GM12878 (cell line): ENCODE measurements at regions of chr12 and their contacts with region 1.

Region 1: DNA sequence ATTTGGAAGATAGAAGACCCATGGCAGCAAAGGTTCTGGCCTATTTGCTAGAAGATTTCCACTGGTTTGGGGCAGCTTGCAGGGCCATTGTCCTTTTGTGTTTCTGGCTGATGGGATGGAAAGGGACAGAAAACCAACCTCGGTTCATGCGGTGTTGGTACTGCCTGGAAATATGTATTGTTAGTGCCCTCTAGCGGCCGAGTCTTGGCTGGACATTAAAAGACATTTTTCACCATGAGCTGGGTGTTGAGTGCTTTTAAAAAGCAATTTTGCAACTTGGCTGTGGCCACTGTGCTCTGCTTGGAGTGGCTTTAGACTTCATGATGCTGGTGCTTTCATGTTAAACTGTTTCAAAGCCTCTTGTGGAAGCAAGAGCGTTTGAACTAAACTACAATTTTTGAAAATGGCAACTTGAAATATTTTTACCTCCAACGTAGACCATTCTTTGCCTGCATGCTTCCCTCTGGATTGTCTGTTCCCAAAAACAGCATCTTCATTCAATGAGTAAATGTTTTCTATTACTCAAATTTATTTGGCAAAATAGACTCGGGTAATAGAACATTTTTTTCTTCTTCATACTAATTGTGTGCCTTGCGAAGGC is 102.7 kb upstream of the TBX5 start:
- DNase-seq: peak; percentile 16
- ATAC-seq: peak; percentile 84
- H3K4me3 ChIP-seq: no peak overlapping the region
- H3K27ac ChIP-seq: no peak overlapping the region
- H3K4me1 ChIP-seq: no peaks in the 10 kb centered on the region
- H3K27me3 ChIP-seq: no peaks in the 10 kb centered on the region
- CTCF ChIP-seq: peak; percentile 62 to 82 (median 72); a peak in 4 of 6 replicates
- EP300 ChIP-seq: no peak
- POLR2A ChIP-seq: no peak
- RAD21 ChIP-seq: peak; percentile 79

Region 2: DNA sequence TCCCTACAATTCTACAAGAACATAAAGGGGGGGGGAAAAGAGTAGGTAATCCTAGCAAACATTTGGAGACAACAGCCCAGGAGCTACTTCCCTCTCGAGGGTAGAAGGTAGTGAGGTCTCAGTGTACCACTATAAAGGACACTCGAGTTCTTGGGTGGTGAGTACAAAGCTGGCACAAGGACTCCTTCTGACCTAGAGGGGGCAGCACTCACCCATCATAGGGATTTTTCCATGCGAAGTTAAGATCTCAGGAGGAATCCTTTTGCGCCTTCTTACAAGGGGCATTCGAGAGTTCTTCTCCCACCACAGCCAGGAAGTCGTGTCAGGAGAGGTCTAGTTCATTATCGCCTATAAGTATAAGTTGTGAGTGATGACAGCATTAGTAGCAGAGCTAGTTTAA is 342.3 kb before region 1 on chr12:
- CTCF ChIA-PET with region 1: interaction called, 20 read pairs
- POLR2A ChIA-PET with region 1: no interaction called
- RAD21 ChIA-PET with region 1: interaction called, 13 read pairs
- SMC1A ChIA-PET with region 1: interaction called, 15 read pairs
- in situ Hi-C with region 1: no loop called
- intact Hi-C with region 1: loop called (anchors 10 kb)
- DNase-seq: no peak
- ATAC-seq: peak; percentile 41; the same call in 2 of the 3 replicates
- H3K4me3 ChIP-seq: no peak overlapping the region
- H3K27ac ChIP-seq: no peak overlapping the region
- H3K4me1 ChIP-seq: no peaks in the 10 kb centered on the region
- H3K27me3 ChIP-seq: no peaks in the 10 kb centered on the region
- CTCF ChIP-seq: peak; percentile 21 to 47 (median 36); a peak in 4 of 6 replicates
- EP300 ChIP-seq: no peak
- POLR2A ChIP-seq: no peak
- RAD21 ChIP-seq: peak; percentile 29; the same call in 1 of the 2 replicates